KBM-7 (cell line): ENCODE measurements at regions of chr11 and their contacts with region 1.

Region 1: GRCh38 chr11:12963792-12964536 is 45.2 kb upstream of the RASSF10 start:
- DNase-seq: peak; percentile 67

Region 2: GRCh38 chr11:12200279-12201010 is 763.5 kb before region 1 on chr11:
- in situ Hi-C with region 1: no loop called
- DNase-seq: no peak

Region 3: DNA sequence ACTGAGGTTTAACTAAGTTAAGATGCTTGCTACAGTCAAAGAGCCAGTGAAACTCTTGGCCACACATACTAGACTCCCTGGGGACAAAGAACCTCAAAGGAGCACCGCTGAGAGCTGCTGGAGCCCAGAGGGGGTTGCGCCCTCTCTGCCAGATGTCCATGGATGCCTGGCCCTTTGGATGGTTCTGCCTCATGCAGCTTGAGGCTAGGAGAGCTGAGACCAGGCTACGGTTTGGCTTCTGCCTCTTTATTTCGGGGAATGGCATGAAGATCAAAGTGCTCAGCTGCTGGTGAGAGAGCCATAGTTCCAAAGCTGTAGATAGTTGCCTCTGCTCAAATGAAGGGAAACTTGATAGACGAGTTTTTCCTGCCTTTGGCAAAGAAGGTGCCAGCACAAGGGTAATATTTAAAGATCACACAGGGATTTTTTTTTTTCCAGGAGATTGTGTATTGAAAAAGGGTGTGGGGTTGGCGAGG is 88.2 kb after region 1 on chr11:
- in situ Hi-C with region 1: no loop called
- DNase-seq: no peak

Region 4: GRCh38 chr11:13183094-13183825 is 219.3 kb after region 1 on chr11:
- in situ Hi-C with region 1: loop called (anchors 25 kb)
- DNase-seq: peak; percentile 16

Region 5: GRCh38 chr11:13343931-13344717 is 380.2 kb after region 1 on chr11:
- in situ Hi-C with region 1: loop called (anchors 25 kb)
- DNase-seq: peak; percentile 87